Astrocyte of the cerebellum (primary cell): ENCODE measurements at regions of chr20 and their contacts with region 1.

Region 1: GRCh38 chr20:8399947-8400346 is 267.9 kb downstream of the PLCB1 start:
- DNase-seq: no peak
- H3K4me3 ChIP-seq: no peak overlapping the region
- CTCF ChIP-seq: no peak

Region 2: GRCh38 chr20:8457978-8458377 is 58.0 kb after region 1 on chr20:
- in situ Hi-C with region 1: loop called (anchors 5 kb)
- DNase-seq: no peak
- H3K4me3 ChIP-seq: no peak overlapping the region
- CTCF ChIP-seq: no peak